PC-9 (cell line): ENCODE measurements at regions of chr1 and their contacts with region 1.

Region 1: DNA sequence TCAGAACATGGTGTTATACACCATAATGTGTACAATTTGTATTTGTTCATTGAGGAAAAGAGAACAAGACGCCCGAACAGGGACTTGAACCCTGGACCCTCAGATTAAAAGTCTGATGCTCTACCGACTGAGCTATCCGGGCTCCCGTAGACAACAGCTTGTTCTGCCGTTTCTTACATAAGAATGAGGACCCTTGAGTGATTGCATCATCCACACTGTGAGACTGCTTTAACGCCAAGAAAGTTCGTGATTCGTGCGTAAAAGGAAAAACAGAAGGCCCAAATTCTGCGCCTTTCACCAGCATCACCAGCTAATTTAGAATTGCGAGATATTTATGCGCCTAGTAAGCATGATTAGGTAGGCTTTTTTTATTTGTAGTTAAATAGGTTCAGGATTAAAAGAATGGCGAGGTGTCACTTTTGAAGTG is 9.2 kb upstream of the MDM4 start:
- DNase-seq: peak; percentile 87 to 88
- H3K4me3 ChIP-seq: peak overlapping the region; percentile 65
- H3K27ac ChIP-seq: peak overlapping the region; percentile 93
- H3K4me1 ChIP-seq: peaks cover 40% of the 10 kb centered on the region
- H3K27me3 ChIP-seq: no peaks in the 10 kb centered on the region
- CTCF ChIP-seq: 0 out of 2 replicates have a peak, but pooled peaks have one; percentile 11

Region 2: GRCh38 chr1:203673550-203674427 is 833.2 kb before region 1 on chr1:
- CTCF ChIA-PET with region 1: no interaction called
- POLR2A ChIA-PET with region 1: no interaction called
- intact Hi-C with region 1: no loop called
- DNase-seq: peak; percentile 86 to 98
- H3K4me3 ChIP-seq: no peak overlapping the region
- H3K27ac ChIP-seq: peak overlapping the region; percentile 69
- H3K4me1 ChIP-seq: peaks cover 50% of the 10 kb centered on the region
- H3K27me3 ChIP-seq: no peaks in the 10 kb centered on the region
- CTCF ChIP-seq: peak; percentile 65

Region 3: DNA sequence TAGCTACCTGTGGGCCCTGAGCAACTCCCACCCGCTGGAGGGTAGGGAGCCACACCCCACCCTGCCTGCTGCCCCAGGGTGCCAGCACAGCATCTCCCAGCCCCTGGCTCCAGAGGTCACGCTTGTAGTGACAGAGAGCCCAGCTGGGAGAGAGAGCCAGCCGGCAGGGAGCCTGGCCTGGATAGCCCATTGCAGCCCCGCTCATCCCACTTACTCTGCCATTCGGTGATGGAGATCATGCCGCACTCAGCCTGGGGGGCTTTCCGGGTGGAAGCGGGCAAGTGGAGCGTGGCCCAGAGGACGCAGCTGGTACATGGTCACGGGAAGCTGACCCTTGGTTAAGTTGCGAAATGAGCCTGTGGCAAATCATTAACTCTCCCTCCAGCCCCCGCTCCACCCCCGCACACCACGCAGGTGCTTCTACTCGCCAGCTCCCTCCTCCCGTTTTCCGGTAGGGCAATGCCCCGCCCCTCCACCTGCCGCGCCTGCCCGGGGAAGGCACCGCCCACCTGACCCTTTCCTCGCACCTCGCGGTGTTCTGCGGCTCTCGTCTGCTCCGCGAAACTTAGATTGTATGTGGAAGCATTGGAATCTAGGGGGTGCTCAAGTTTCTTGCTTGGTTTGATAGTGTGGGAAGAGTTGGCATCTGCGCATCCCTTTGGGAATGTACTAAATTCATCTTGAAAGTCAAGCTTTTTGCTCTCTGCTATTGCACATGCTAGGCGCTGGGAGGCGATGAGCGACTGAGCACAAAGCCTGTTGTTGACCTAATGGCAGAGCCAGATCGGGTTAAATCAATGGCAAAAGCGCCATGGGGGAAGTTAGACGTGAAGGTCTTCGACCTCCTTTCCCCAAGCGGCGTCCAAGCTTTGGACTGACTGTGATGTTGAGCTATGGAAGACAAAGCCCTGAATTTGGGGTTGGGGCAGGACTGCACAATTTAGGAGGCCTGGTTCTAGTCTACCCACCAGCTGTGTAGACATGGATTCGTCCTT is 293.0 kb before region 1 on chr1 and contains the start of gene GOLT1A:
- CTCF ChIA-PET with region 1: interaction called, 4 read pairs
- POLR2A ChIA-PET with region 1: no interaction called
- intact Hi-C with region 1: loop called (anchors 2 kb)
- DNase-seq: peak; percentile 91 to 93
- H3K4me3 ChIP-seq: peak within 1 kb of the TSS; percentile 58
- H3K27ac ChIP-seq: no peak within 1 kb of the TSS
- H3K4me1 ChIP-seq: peaks cover 17% of the 10 kb centered on the region
- H3K27me3 ChIP-seq: no peaks in the 10 kb centered on the region
- CTCF ChIP-seq: peak; percentile 82
- total RNA-seq, gene GOLT1A: 18.7 and 22.8 TPM in 2 replicates

Region 4: DNA sequence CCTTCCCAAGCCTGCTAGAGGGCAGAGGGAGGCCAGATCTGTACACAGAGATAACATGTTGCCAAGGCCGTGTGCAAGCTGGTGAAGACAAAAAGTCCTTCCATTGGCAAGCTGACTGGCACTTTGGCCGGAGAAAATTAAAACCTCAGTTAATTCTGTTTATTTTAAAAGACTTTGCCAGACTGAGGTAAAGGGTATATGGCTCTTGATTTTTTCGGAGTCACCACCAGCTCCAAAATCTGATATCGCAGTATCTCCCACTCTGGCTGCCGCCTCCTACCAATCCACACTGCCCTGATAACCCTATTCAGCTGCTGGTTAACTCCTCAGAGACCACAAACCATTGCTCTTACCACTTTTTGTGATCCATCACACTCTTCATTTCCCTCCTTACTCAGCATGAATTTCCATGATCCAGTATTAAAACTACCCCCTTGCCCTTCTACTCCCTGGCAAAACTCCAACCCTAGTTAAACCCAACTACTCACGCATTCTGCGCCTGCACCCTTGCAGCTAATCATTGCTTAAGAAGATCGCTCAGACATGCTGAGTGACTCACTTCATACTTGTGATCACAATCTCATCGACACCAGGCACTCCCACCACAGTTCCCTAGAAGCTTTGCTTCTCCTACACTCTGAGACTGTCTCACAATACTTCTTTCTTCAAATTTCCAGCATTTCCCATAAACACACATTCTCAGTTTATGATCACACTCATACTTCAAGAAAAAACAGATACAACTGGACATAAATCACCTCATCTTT is 89.6 kb before region 1 on chr1:
- CTCF ChIA-PET with region 1: interaction called, 8 read pairs
- POLR2A ChIA-PET with region 1: interaction called, 17 read pairs
- intact Hi-C with region 1: no loop called
- DNase-seq: peak; percentile 77 to 96
- H3K4me3 ChIP-seq: peak overlapping the region; percentile 51
- H3K27ac ChIP-seq: peak overlapping the region; percentile 98
- H3K4me1 ChIP-seq: peaks cover 73% of the 10 kb centered on the region
- H3K27me3 ChIP-seq: no peaks in the 10 kb centered on the region
- CTCF ChIP-seq: no peak

Region 5: DNA sequence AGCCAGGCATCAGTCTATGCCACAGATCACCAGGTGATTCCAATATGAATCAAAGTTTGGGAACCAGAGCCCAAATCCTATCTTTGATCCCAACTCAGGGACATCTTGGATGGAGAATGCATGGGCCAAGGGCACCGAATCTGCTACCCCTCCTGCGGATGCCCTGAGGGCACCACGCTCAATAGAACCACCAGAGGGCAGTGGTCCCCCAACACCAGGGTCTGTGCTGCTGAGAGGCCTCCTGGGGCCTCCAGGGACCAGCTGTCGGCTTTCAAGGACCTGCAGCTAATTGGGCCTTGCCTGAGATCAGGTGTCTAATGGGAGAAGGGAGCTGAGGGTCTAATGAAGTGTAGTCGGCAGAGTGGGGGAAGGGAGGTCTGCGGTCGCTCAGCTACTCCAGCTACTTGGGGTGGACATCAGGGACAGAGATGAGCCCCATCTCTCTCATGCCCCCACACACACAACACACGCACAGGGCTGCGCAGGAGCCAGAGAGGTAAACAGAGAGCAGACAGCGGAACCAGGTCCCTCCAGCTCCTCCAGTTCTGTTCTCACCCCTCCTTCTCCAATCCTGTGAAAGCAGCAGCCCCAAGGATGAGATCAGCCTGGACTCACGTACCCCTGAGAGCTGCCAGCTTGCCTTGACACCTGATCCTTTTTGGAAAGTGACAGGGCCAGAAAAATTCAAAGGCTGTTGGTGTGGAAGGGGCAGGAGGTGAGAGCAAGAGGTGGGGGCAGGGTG is 60.4 kb before region 1 on chr1:
- CTCF ChIA-PET with region 1: interaction called, 7 read pairs
- POLR2A ChIA-PET with region 1: interaction called, 7 read pairs
- intact Hi-C with region 1: loop called (anchors 2 kb)
- DNase-seq: peak in 1 of 2 experiments; percentile 34
- H3K4me3 ChIP-seq: no peak overlapping the region
- H3K27ac ChIP-seq: no peak overlapping the region
- H3K4me1 ChIP-seq: peaks cover 73% of the 10 kb centered on the region
- H3K27me3 ChIP-seq: no peaks in the 10 kb centered on the region
- CTCF ChIP-seq: peak; percentile 57

Region 6: DNA sequence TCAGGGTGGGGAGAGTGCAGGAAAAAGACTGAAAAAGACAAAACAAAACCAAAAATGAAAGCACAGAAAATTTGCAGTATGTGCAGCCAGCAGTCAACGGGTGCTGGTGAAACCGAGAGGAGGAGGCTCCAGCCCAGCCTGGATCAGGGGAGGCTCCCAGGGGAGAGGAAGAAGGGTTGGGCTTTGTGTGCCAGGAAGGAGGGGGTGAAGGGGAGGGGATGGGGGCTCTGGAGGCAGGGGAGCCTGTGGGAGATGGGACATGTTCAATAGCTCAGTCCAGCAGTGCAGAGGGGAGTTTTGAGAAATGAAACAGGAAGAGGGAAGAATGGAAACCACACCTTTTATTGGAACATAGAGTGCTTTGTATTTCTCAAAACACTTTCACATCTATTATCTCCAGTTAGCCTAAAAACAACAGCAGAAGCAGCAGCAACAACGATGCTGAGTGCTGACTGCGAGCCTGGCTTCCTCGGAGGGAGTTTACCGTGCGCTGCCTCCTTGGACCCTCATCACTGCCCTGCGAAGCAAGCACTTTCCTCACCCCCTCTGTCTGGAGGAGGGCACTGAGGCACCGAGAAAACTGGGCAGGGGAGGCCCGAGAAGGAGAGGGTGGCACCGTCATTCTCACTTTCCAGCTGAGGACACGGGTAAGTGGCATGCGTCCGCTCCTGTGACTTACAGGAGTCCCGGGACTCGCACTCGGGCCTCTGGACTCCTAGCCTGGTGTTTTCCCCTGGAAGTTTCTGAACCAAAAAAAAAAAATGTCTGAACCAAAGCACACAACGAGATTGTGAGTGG is 72.1 kb after region 1 on chr1:
- CTCF ChIA-PET with region 1: interaction called, 14 read pairs
- POLR2A ChIA-PET with region 1: interaction called, 5 read pairs
- intact Hi-C with region 1: no loop called
- DNase-seq: no peak
- H3K4me3 ChIP-seq: no peak overlapping the region
- H3K27ac ChIP-seq: no peak overlapping the region
- H3K4me1 ChIP-seq: peaks cover 6% of the 10 kb centered on the region
- H3K27me3 ChIP-seq: no peaks in the 10 kb centered on the region
- CTCF ChIP-seq: no peak